CD8-positive, alpha-beta T cell (primary cell): ENCODE measurements at regions of chr14 and their contacts with region 1.

Region 1: DNA sequence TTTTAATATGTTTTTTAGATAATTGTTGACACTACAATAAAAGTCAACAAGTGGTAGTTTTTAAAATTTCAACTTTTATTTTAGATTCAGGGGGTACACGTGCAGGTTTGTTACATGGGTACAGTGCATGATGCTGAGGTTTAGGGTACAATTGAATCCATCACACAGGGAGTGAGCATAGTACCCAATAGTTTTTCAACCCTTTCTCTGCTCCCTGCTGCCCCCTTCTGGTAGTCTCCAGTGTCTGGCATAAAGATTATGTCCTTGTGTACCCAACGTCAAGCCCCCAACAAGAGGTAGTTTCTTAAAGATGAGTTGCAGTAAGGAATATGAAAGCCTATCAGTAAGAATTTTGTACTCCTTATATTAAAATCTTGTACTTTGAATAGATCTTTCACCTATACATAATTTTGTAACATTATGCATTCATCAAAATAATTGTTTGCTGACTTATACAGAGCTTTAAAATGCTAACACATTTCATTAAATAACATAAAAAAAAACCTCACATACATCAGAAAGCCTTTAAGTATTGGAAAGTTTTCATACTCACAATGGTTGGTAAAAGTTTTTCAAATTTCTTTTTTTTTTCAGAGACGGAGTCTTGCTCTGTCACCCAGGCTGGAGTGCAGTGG is 5.4 kb upstream of the RALGAPA1 start:
- DNase-seq: peak; percentile 56 to 92 (median 83)
- ATAC-seq: peak; percentile 93
- H3K4me3 ChIP-seq: no peak overlapping the region
- H3K4me3 Mint-ChIP-seq: no peak overlapping the region
- H3K27ac ChIP-seq: no peak overlapping the region
- H3K27ac Mint-ChIP-seq: no peak overlapping the region
- H3K4me1 ChIP-seq: no peaks in the 10 kb centered on the region
- H3K4me1 Mint-ChIP-seq: peaks cover 5% of the 10 kb centered on the region
- H3K27me3 ChIP-seq: no peaks in the 10 kb centered on the region
- H3K27me3 Mint-ChIP-seq: no peaks in the 10 kb centered on the region
- CTCF ChIP-seq: peak; percentile 57

Region 2: GRCh38 chr14:35140718-35141581 is 673.5 kb before region 1 on chr14:
- CTCF ChIA-PET with region 1: interaction called, 4 read pairs
- POLR2A ChIA-PET with region 1: no interaction called
- intact Hi-C with region 1: loop called in 1 of 2 experiments (anchors 5 kb)
- DNase-seq: peak in 2 of 9 experiments; percentile 40 to 44
- ATAC-seq: peak; percentile 67
- H3K4me3 ChIP-seq: no peak overlapping the region
- H3K4me3 Mint-ChIP-seq: no peak overlapping the region
- H3K27ac ChIP-seq: no peak overlapping the region
- H3K27ac Mint-ChIP-seq: peak overlapping the region; percentile 67
- H3K4me1 ChIP-seq: no peaks in the 10 kb centered on the region
- H3K4me1 Mint-ChIP-seq: peaks cover 19% of the 10 kb centered on the region
- H3K27me3 ChIP-seq: no peaks in the 10 kb centered on the region
- H3K27me3 Mint-ChIP-seq: no peaks in the 10 kb centered on the region
- CTCF ChIP-seq: peak; percentile 83

Region 3: GRCh38 chr14:35678403-35679028 is 136.0 kb before region 1 on chr14:
- CTCF ChIA-PET with region 1: no interaction called
- POLR2A ChIA-PET with region 1: no interaction called
- intact Hi-C with region 1: no loop called
- DNase-seq: no peak
- ATAC-seq: no peak
- H3K4me3 ChIP-seq: no peak overlapping the region
- H3K4me3 Mint-ChIP-seq: no peak overlapping the region
- H3K27ac ChIP-seq: no peak overlapping the region
- H3K27ac Mint-ChIP-seq: no peak overlapping the region
- H3K4me1 ChIP-seq: no peaks in the 10 kb centered on the region
- H3K4me1 Mint-ChIP-seq: no peaks in the 10 kb centered on the region
- H3K27me3 ChIP-seq: no peaks in the 10 kb centered on the region
- H3K27me3 Mint-ChIP-seq: no peaks in the 10 kb centered on the region
- CTCF ChIP-seq: no peak

Region 4: DNA sequence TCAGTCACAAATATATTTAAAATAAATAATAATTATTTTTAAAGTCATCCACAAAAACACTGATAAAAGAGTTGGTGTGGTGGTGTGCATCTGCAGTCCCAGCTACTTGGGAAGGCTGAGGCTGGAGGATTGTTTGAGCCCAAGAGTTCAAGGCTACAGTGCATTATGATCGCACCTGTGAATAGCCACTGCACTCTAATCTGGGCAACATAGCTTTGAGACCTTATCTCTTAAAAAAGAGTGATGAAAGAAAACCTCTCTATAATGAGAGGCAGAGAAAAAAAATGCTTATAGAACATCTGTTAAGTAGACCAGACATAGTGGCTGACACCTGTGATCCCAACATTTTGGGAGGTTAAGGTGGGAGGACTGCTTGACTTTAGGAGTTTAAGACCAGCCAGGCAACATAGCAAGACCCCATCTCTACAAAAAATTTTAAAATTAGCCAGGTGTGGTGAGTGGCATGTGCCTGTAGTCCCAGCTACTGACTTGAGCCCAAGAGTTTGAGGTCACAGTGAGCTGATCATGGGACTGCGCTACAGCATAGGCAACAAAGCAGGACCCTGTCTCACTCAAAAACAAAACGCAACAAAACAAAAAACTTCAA is 55.9 kb before region 1 on chr14:
- CTCF ChIA-PET with region 1: interaction called, 4 read pairs
- POLR2A ChIA-PET with region 1: no interaction called
- intact Hi-C with region 1: loop called in 1 of 2 experiments (anchors 5 kb)
- DNase-seq: no peak
- ATAC-seq: no peak
- H3K4me3 ChIP-seq: no peak overlapping the region
- H3K4me3 Mint-ChIP-seq: no peak overlapping the region
- H3K27ac ChIP-seq: no peak overlapping the region
- H3K27ac Mint-ChIP-seq: no peak overlapping the region
- H3K4me1 ChIP-seq: no peaks in the 10 kb centered on the region
- H3K4me1 Mint-ChIP-seq: no peaks in the 10 kb centered on the region
- H3K27me3 ChIP-seq: no peaks in the 10 kb centered on the region
- H3K27me3 Mint-ChIP-seq: no peaks in the 10 kb centered on the region
- CTCF ChIP-seq: no peak

Region 5: DNA sequence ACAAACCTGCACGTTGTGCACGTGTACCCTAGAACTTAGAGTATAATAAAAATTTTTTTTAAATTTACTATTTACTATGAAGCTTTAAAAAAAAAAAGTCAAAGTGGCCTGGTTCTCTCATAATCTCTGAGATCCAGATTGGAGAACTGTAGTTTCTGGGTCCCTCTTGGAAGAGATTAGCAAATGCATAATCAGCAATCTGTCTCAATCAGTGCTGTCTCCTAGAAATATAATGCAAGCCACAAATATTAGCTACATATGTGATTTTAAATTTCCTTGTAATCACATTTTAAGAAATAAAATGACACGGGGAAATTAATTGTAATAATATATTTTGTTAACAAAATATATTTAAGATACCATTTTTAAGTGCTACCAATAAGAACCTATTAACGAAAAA is 37.7 kb before region 1 on chr14:
- CTCF ChIA-PET with region 1: no interaction called
- POLR2A ChIA-PET with region 1: interaction called, 5 read pairs
- intact Hi-C with region 1: loop called in 1 of 2 experiments (anchors 5 kb)
- DNase-seq: no peak
- ATAC-seq: no peak
- H3K4me3 ChIP-seq: no peak overlapping the region
- H3K4me3 Mint-ChIP-seq: no peak overlapping the region
- H3K27ac ChIP-seq: no peak overlapping the region
- H3K27ac Mint-ChIP-seq: no peak overlapping the region
- H3K4me1 ChIP-seq: no peaks in the 10 kb centered on the region
- H3K4me1 Mint-ChIP-seq: peaks cover 7% of the 10 kb centered on the region
- H3K27me3 ChIP-seq: no peaks in the 10 kb centered on the region
- H3K27me3 Mint-ChIP-seq: no peaks in the 10 kb centered on the region
- CTCF ChIP-seq: no peak

Region 6: GRCh38 chr14:35789651-35790050 is 24.8 kb before region 1 on chr14:
- CTCF ChIA-PET with region 1: no interaction called
- POLR2A ChIA-PET with region 1: no interaction called
- intact Hi-C with region 1: no loop called
- DNase-seq: peak in 3 of 9 experiments; percentile 18 to 35 (median 21)
- ATAC-seq: no peak
- H3K4me3 ChIP-seq: no peak overlapping the region
- H3K4me3 Mint-ChIP-seq: no peak overlapping the region
- H3K27ac ChIP-seq: no peak overlapping the region
- H3K27ac Mint-ChIP-seq: no peak overlapping the region
- H3K4me1 ChIP-seq: peaks cover 13% of the 10 kb centered on the region
- H3K4me1 Mint-ChIP-seq: peaks cover 41% of the 10 kb centered on the region
- H3K27me3 ChIP-seq: no peaks in the 10 kb centered on the region
- H3K27me3 Mint-ChIP-seq: no peaks in the 10 kb centered on the region
- CTCF ChIP-seq: no peak

Region 7: GRCh38 chr14:35855876-35856481 is 41.5 kb after region 1 on chr14:
- CTCF ChIA-PET with region 1: no interaction called
- POLR2A ChIA-PET with region 1: no interaction called
- intact Hi-C with region 1: no loop called
- DNase-seq: no peak
- ATAC-seq: no peak
- H3K4me3 ChIP-seq: no peak overlapping the region
- H3K4me3 Mint-ChIP-seq: no peak overlapping the region
- H3K27ac ChIP-seq: no peak overlapping the region
- H3K27ac Mint-ChIP-seq: no peak overlapping the region
- H3K4me1 ChIP-seq: no peaks in the 10 kb centered on the region
- H3K4me1 Mint-ChIP-seq: no peaks in the 10 kb centered on the region
- H3K27me3 ChIP-seq: no peaks in the 10 kb centered on the region
- H3K27me3 Mint-ChIP-seq: no peaks in the 10 kb centered on the region
- CTCF ChIP-seq: no peak